AG04449 (cell line): ENCODE measurements at regions of chr17 and their contacts with region 1.

Region 1: GRCh38 chr17:43338886-43339516 is 59.8 kb upstream of the ARL4D start:
- DNase-seq: no peak
- H3K4me3 ChIP-seq: no peak overlapping the region
- CTCF ChIP-seq: peak; percentile 78

Region 2: GRCh38 chr17:43327421-43327820 is 11.6 kb before region 1 on chr17:
- CTCF ChIA-PET with region 1: interaction called, 17 read pairs
- POLR2A ChIA-PET with region 1: no interaction called
- DNase-seq: no peak
- H3K4me3 ChIP-seq: no peak overlapping the region
- CTCF ChIP-seq: no peak

Region 3: GRCh38 chr17:43349142-43349541 is 10.1 kb after region 1 on chr17:
- CTCF ChIA-PET with region 1: interaction called, 12 read pairs
- POLR2A ChIA-PET with region 1: no interaction called
- DNase-seq: no peak
- H3K4me3 ChIP-seq: no peak overlapping the region
- CTCF ChIP-seq: no peak

Region 4: GRCh38 chr17:43360739-43361505 is 21.9 kb after region 1 on chr17:
- CTCF ChIA-PET with region 1: interaction called, 32 read pairs
- POLR2A ChIA-PET with region 1: interaction called, 5 read pairs
- DNase-seq: peak; percentile 99
- H3K4me3 ChIP-seq: peak overlapping the region; percentile 58
- CTCF ChIP-seq: no peak